ENCODE measurements at regions of chr2 and their contacts with region 1.

Region 1: DNA sequence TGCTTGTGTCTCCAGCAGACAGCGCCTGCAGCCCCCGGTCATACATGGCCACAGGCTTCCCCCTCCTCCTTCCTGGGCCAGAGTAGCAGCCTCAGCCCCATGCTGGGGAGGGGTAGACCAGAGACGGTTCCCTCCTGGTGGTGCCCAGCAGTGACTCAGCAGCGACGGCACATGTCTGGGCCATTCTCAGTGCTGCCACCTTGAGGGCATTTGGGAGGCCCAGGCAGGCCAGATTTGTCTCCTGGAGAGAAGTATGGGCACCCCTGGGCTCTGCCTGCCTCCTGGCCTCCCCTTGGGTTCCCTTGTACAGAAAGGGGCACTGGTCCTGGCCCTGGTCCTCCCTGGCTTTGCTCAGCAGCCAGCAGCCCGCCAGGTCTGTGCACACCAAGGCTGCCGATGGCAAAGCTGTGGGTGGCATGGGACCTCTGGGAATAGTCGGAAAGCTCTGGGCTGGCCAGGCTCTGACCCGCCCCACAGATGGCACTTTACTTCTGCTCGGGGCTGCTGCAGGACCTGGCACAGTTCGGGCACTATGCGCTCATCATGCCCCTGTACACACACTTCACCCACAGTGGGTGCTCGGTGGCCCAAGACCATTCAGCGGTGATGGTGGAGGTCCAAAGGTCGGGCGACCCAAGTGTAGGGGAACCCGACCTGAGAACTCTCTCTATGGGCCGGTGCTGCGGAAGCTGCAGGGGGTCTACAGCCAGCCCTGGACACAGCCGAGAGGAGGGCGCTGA is 11.4 kb upstream of the ALPI start:
- DNase-seq: peak; percentile 60
- H3K4me3 ChIP-seq: no peak overlapping the region
- H3K27ac ChIP-seq: no peak overlapping the region
- H3K4me1 ChIP-seq: no peaks in the 10 kb centered on the region
- H3K27me3 ChIP-seq: no peaks in the 10 kb centered on the region
- CTCF ChIP-seq: peak; percentile 38 to 70 (median 53)
- EP300 ChIP-seq: no peak
- POLR2A ChIP-seq: no peak

Region 2: DNA sequence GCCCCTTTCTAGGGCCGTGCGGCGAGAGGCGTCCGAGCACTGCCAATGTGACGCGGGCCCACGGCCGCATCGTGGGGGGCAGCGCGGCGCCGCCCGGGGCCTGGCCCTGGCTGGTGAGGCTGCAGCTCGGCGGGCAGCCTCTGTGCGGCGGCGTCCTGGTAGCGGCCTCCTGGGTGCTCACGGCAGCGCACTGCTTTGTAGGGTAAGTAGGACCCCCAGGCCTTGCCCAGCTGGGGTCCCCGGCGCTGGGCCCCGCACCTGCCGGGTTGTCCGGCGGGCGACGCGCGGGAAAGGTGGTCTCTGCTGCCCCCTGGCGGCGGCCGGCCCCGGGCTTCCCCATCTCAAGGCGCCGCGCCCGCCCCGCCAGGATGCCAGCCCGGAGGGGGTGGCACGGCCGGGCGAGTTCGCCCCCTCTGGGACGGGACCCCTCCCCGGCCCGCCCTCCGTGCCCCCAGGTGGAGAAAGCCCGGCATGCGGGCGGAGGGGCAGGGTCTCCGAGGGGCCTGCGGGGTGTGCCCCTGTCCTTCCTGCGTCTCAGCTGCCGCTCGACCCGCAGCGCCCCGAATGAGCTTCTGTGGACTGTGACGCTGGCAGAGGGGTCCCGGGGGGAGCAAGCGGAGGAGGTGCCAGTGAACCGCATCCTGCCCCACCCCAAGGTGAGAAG is 77.5 kb after region 1 on chr2:
- in situ Hi-C with region 1: no loop called
- intact Hi-C with region 1: loop called (anchors 5 kb)
- DNase-seq: peak; percentile 57
- H3K4me3 ChIP-seq: peak overlapping the region in 2 of 4 donors; percentile 4 to 28
- H3K27ac ChIP-seq: no peak overlapping the region
- H3K4me1 ChIP-seq: peaks cover 0 to 25% (median 25%) of the 10 kb centered on the region in 4 donors
- H3K27me3 ChIP-seq: peaks cover 78% of the 10 kb centered on the region
- CTCF ChIP-seq: peak in 4 of 5 experiments; percentile 78 to 96 (median 88)
- EP300 ChIP-seq: no peak
- POLR2A ChIP-seq: no peak